ENCODE measurements at regions of chr13 and their contacts with region 1.

Region 1: DNA sequence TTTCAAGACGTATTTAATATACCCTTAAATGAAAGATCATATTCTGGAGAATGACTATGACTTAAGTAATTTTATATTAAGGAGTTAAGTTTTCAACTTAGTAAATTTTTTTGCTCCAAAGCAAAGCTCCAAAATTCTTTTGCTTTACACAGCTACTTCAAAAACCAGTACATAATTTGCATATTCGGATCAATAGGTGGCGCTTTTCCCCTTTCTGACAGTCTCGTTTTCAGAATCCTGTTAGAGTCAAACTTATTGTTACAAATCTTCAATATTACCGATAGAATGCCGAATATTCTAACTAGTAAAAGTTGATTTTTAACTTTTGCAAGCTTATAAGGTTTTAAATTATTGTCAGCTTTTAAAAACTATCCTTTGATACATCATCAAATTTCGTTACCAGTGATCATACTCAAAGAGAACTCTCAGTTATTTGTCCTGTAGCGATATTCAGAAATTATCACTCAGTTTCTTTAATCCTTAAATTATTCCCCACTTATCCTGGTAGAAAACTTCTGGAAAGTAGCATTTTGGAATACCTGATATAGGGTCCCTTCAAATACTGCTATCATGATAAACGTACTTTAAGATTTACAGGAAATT is 852.7 kb upstream of the KLHL1 start:
- DNase-seq: peak; percentile 51
- ATAC-seq: no peak
- H3K4me3 ChIP-seq: peak overlapping the region; percentile 42; the same call in 1 of the 2 replicates
- H3K27ac ChIP-seq: no peak overlapping the region
- H3K4me1 ChIP-seq: no peaks in the 10 kb centered on the region
- H3K27me3 ChIP-seq: no peaks in the 10 kb centered on the region
- CTCF ChIP-seq: peak; percentile 75

Region 2: DNA sequence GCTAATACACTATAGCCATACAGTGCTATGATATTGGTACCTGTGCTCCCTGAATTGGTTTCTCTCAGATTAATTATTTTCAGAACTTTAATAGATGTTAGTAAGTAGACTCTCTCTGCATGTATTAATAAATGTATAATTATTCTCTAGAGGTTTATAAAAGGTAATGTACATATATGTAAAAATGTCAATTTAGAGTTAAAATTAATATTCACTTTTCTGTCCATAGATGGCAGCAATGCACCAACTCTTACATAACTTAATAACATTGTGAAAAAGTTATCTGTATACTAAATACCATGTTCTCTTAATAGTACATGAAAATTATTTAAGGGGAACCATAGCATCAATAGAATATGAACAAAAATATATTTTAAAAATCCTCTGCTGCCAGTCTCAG is 337.7 kb before region 1 on chr13:
- CTCF ChIA-PET with region 1: no interaction called
- POLR2A ChIA-PET with region 1: no interaction called
- intact Hi-C with region 1: loop called (anchors 2 kb)
- DNase-seq: peak; percentile 56
- ATAC-seq: peak; percentile 53
- H3K4me3 ChIP-seq: no peak overlapping the region
- H3K27ac ChIP-seq: no peak overlapping the region
- H3K4me1 ChIP-seq: no peaks in the 10 kb centered on the region
- H3K27me3 ChIP-seq: no peaks in the 10 kb centered on the region
- CTCF ChIP-seq: peak; percentile 59; the same call in 1 of the 2 replicates

Region 3: GRCh38 chr13:70792121-70792520 is 168.8 kb before region 1 on chr13:
- CTCF ChIA-PET with region 1: interaction called, 9 read pairs
- POLR2A ChIA-PET with region 1: no interaction called
- intact Hi-C with region 1: loop called (anchors 5 kb)
- DNase-seq: peak; percentile 8
- ATAC-seq: no peak
- H3K4me3 ChIP-seq: no peak overlapping the region
- H3K27ac ChIP-seq: no peak overlapping the region
- H3K4me1 ChIP-seq: no peaks in the 10 kb centered on the region
- H3K27me3 ChIP-seq: no peaks in the 10 kb centered on the region
- CTCF ChIP-seq: 0 out of 2 replicates have a peak, but pooled peaks have one; percentile 20

Region 4: GRCh38 chr13:70829748-70830147 is 131.2 kb before region 1 on chr13:
- CTCF ChIA-PET with region 1: no interaction called
- POLR2A ChIA-PET with region 1: no interaction called
- intact Hi-C with region 1: no loop called
- DNase-seq: no peak
- ATAC-seq: no peak
- H3K4me3 ChIP-seq: no peak overlapping the region
- H3K27ac ChIP-seq: no peak overlapping the region
- H3K4me1 ChIP-seq: no peaks in the 10 kb centered on the region
- H3K27me3 ChIP-seq: no peaks in the 10 kb centered on the region
- CTCF ChIP-seq: no peak